Dendritic cell treated with granulocyte-macrophage colony-stimulating factor and Interleukin-4, amounts not matched to agents 40 ng/mL and 50 ng/mL, for 4 days (primary cell): ENCODE measurements at regions of chr9 and their contacts with region 1.

Region 1: GRCh38 chr9:136587145-136587943 is 41.5 kb upstream of the NOTCH1 start:
- H3K4me3 Mint-ChIP-seq: peak overlapping the region; percentile 34
- H3K27ac Mint-ChIP-seq: no peak overlapping the region
- H3K4me1 Mint-ChIP-seq: peaks cover 50% of the 10 kb centered on the region
- H3K27me3 Mint-ChIP-seq: peaks cover 55% of the 10 kb centered on the region

Region 2: GRCh38 chr9:136564379-136564988 is 22.9 kb before region 1 on chr9:
- intact Hi-C with region 1: loop called (anchors 1 kb)
- H3K4me3 Mint-ChIP-seq: peak overlapping the region; percentile 13
- H3K27ac Mint-ChIP-seq: peak overlapping the region; percentile 77
- H3K4me1 Mint-ChIP-seq: peaks cover 81% of the 10 kb centered on the region
- H3K27me3 Mint-ChIP-seq: peaks cover 3% of the 10 kb centered on the region